Dorsolateral prefrontal cortex (tissue), 120 donors: ENCODE measurements at regions of chr3 and their contacts with region 1.

Region 1: GRCh38 chr3:146218880-146219866 is 31.7 kb downstream of the PLSCR4 start:
- DNase-seq: peak in 3 of 10 donors; percentile 8 to 28 (median 26)
- H3K4me3 ChIP-seq: no peak overlapping the region
- H3K27ac ChIP-seq: no peak overlapping the region
- H3K27me3 ChIP-seq: no peaks in the 10 kb centered on the region
- CTCF ChIP-seq: peak; percentile 74 to 97 (median 84)

Region 2: GRCh38 chr3:146093932-146094583 is 125.1 kb before region 1 on chr3:
- intact Hi-C with region 1: no loop called
- DNase-seq: no peak
- H3K4me3 ChIP-seq: no peak overlapping the region
- H3K27ac ChIP-seq: no peak overlapping the region
- H3K27me3 ChIP-seq: no peaks in the 10 kb centered on the region
- CTCF ChIP-seq: no peak

Region 3: GRCh38 chr3:146326670-146327543 is 107.7 kb after region 1 on chr3:
- intact Hi-C with region 1: loop called (anchors 5 to 10 kb)
- DNase-seq: peak in 1 of 10 donors; percentile 15
- H3K4me3 ChIP-seq: peak overlapping the region in 1 of 59 donors; percentile 19
- H3K27ac ChIP-seq: no peak overlapping the region
- H3K27me3 ChIP-seq: peaks cover 0 to 5% (median 0%) of the 10 kb centered on the region in 45 donors
- CTCF ChIP-seq: peak in 53 of 56 donors; percentile 32 to 85 (median 60)

Region 4: GRCh38 chr3:146577662-146578061 is 358.5 kb after region 1 on chr3:
- intact Hi-C with region 1: loop called in 1 of 2 experiments (anchors 5 kb)
- DNase-seq: peak in 1 of 10 donors; percentile 36
- H3K4me3 ChIP-seq: no peak overlapping the region
- H3K27ac ChIP-seq: no peak overlapping the region
- H3K27me3 ChIP-seq: no peaks in the 10 kb centered on the region
- CTCF ChIP-seq: peak; percentile 12 to 83 (median 56)